Naive thymus-derived CD8-positive, alpha-beta T cell (primary cell): ENCODE measurements at regions of chr15 and their contacts with region 1.

Region 1: GRCh38 chr15:63448266-63448665 is 56.1 kb upstream of the USP3 start:
- DNase-seq: no peak
- ATAC-seq: no peak
- H3K4me3 Mint-ChIP-seq: no peak overlapping the region
- H3K27ac Mint-ChIP-seq: peak overlapping the region in 4 of 10 donors; percentile 38 to 84 (median 60)
- H3K4me1 Mint-ChIP-seq: peaks cover 7 to 52% (median 31%) of the 10 kb centered on the region in 4 donors
- H3K27me3 Mint-ChIP-seq: no peaks in the 10 kb centered on the region

Region 2: DNA sequence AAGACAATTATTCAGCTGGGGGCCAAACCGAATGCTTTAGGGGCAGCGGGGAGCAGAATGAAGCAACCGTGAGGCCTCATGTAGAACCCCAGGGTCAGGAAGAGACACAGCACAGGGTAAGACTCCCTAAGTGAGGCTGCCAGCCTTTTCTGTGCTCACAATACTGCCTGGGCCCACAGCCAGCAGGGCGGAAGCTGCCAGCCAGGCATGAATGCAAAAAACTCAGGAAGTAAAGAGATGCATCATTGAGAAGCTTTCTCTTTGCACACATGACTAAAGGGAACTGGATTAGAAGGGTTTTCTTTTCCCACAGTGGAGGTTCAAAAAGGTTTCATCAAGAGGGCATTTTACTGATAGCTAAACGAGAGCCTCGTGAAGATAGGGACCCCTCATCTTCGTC is 99.9 kb before region 1 on chr15:
- POLR2A ChIA-PET with region 1: no interaction called
- DNase-seq: no peak
- ATAC-seq: no peak
- H3K4me3 Mint-ChIP-seq: no peak overlapping the region
- H3K27ac Mint-ChIP-seq: no peak overlapping the region
- H3K4me1 Mint-ChIP-seq: peaks cover 0 to 10% (median under 1%) of the 10 kb centered on the region in 4 donors
- H3K27me3 Mint-ChIP-seq: peaks cover 0 to 7% (median 0%) of the 10 kb centered on the region in 5 donors

Region 3: DNA sequence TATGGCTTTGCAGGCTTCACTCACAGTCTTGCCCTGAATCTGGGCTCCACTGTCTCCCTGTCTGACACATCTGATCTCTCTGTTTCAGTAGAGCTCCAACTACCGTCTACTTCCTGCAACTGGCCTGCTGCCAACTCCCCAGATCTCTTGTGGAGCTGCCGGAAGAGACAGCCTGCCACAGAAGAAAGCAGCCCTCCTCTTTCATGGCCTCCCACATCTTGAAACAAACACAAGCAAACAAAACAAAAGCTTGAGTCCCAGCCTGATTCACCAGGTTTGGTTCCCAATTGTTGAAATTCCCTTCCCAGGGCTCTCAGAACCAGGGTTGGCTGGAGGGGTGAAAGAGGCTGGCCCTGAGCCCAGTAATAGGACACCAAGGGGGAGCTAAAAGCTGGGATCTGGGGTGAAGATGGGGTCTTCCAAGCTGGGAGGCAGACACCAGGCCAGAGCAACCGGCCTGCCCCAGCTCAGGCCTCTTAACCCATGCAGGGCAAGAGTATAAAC is 11.3 kb before region 1 on chr15:
- POLR2A ChIA-PET with region 1: interaction called, 25 read pairs
- DNase-seq: peak; percentile 71 to 94 (median 83)
- ATAC-seq: peak; percentile 95 to 98
- H3K4me3 Mint-ChIP-seq: peak overlapping the region; percentile 3 to 91 (median 59)
- H3K27ac Mint-ChIP-seq: peak overlapping the region; percentile 81 to 99 (median 96)
- H3K4me1 Mint-ChIP-seq: peaks cover 15 to 56% (median 38%) of the 10 kb centered on the region in 4 donors
- H3K27me3 Mint-ChIP-seq: no peaks in the 10 kb centered on the region